GM12878 (cell line): ENCODE measurements at regions of chr6 and their contacts with region 1.

Region 1: DNA sequence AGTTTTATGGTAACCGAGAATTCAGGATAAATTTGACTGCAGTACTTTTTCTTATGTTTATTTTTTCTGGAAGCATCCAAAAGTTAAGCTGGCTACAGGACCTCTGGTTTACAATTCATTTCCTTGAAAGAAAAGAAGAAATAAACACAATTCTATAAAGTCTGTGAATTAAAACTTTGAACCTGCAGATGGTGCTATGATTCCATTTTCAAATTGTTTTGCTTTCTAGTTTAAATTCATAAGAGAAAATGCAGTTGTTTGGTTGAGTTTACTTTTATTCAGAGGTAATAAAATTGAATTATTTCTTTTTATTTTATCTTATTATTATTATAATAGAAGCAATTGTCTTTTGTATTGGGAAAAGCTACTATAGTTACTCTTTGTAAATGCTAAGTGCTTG is 1.8 kb upstream of the VIP start:
- DNase-seq: no peak
- ATAC-seq: no peak
- H3K4me3 ChIP-seq: no peak overlapping the region
- H3K27ac ChIP-seq: no peak overlapping the region
- H3K4me1 ChIP-seq: no peaks in the 10 kb centered on the region
- H3K27me3 ChIP-seq: no peaks in the 10 kb centered on the region
- CTCF ChIP-seq: no peak; a peak in 1 of 6 replicates
- EP300 ChIP-seq: no peak
- POLR2A ChIP-seq: no peak
- RAD21 ChIP-seq: 0 out of 2 replicates have a peak, but pooled peaks have one; percentile 33

Region 2: GRCh38 chr6:152897799-152898399 is 149.1 kb after region 1 on chr6:
- CTCF ChIA-PET with region 1: interaction called, 6 read pairs
- POLR2A ChIA-PET with region 1: no interaction called
- RAD21 ChIA-PET with region 1: interaction called, 5 read pairs
- SMC1A ChIA-PET with region 1: no interaction called
- in situ Hi-C with region 1: no loop called
- intact Hi-C with region 1: loop called (anchors 5 kb)
- DNase-seq: peak; percentile 4
- ATAC-seq: peak; percentile 99
- H3K4me3 ChIP-seq: no peak overlapping the region
- H3K27ac ChIP-seq: no peak overlapping the region
- H3K4me1 ChIP-seq: no peaks in the 10 kb centered on the region
- H3K27me3 ChIP-seq: no peaks in the 10 kb centered on the region
- CTCF ChIP-seq: peak; percentile 85 to 96 (median 91)
- EP300 ChIP-seq: no peak
- POLR2A ChIP-seq: no peak
- RAD21 ChIP-seq: peak; percentile 61

Region 3: GRCh38 chr6:152948150-152948768 is 199.4 kb after region 1 on chr6:
- CTCF ChIA-PET with region 1: interaction called, 25 read pairs
- POLR2A ChIA-PET with region 1: no interaction called
- RAD21 ChIA-PET with region 1: interaction called, 3 read pairs
- SMC1A ChIA-PET with region 1: interaction called, 7 read pairs
- in situ Hi-C with region 1: no loop called
- intact Hi-C with region 1: loop called (anchors 2 kb)
- DNase-seq: no peak
- ATAC-seq: peak; percentile 91
- H3K4me3 ChIP-seq: no peak overlapping the region
- H3K27ac ChIP-seq: no peak overlapping the region
- H3K4me1 ChIP-seq: no peaks in the 10 kb centered on the region
- H3K27me3 ChIP-seq: no peaks in the 10 kb centered on the region
- CTCF ChIP-seq: peak; percentile 54 to 62 (median 60)
- EP300 ChIP-seq: no peak
- POLR2A ChIP-seq: no peak
- RAD21 ChIP-seq: peak; percentile 79